ENCODE measurements at regions of chr1 and their contacts with region 1.

Region 1: DNA sequence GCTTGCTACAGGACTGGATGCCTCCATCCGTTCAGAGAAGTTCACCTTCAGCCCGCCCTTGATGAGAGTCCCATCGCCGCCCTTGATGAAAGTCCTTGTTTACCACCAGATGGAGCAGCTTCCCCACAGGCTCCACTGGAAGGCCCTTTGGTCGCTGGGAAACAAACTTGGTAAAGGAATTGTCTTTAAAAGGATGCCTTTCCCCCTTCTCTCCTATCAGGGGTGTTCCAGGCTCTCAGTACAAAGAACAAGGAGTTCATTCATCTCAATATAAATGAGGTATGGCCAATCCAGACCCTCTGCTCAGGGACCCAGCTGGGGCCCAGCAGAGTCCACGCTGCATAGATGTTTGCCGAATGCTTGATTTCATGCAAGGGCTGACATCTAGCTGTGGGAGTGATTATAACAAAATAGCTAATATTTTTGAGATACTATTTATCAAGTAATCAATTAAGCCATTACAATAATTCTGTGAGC is 50.8 kb downstream of the CAPN9 start:
- DNase-seq: peak; percentile 41
- ATAC-seq: peak; percentile 89
- H3K4me3 ChIP-seq: no peak overlapping the region
- H3K27ac ChIP-seq: no peak overlapping the region
- H3K4me1 ChIP-seq: no peaks in the 10 kb centered on the region
- H3K27me3 ChIP-seq: no peaks in the 10 kb centered on the region
- CTCF ChIP-seq: peak; percentile 59 to 93 (median 67)
- POLR2A ChIP-seq: no peak
- RAD21 ChIP-seq: peak; percentile 93

Region 2: DNA sequence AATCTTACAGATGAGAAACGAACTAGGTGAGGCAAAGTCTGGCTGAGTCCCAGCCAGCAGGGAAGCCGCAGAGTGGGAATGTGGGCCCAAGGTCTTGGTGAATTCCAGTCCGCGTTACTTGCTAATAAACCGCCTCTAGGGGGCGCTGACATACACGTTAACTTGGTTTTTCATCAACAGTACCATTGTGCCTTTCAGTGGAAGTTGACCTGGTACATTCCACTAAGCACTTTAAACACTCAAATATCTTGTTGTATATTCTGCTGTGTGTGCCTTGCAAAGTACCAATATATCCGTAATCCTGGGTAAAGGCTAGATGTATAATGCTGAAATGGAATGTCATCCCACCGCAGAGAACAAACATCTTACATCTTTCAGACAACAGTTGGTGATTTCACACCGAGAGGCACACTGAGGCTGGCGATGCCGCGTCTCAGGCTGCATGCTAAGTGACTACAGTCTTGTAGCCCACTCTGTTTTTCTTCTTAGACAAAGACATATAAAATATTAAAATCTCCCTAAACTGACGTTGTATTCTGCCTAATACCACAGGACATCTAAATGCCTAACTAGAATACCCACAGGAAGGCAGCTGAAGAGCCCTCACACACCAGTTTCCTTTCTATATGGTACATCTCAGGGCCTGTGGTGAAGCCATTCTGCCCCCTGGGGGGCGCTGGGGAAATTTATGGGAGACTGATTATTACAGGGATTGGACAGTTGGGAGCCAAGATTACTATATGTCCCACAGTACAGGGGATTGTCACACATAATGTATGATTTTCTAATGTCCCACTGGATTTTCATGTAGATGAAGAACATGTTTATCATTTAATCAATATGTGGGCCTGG is 119.5 kb after region 1 on chr1:
- CTCF ChIA-PET with region 1: no interaction called
- POLR2A ChIA-PET with region 1: no interaction called
- RAD21 ChIA-PET with region 1: no interaction called
- intact Hi-C with region 1: loop called (anchors 5 kb)
- DNase-seq: peak; percentile 62
- ATAC-seq: peak; percentile 88
- H3K4me3 ChIP-seq: no peak overlapping the region
- H3K27ac ChIP-seq: no peak overlapping the region
- H3K4me1 ChIP-seq: peaks cover 0 to 6% of the 10 kb centered on the region in 2 experiments; a peak in 1 of 4 replicates
- H3K27me3 ChIP-seq: no peaks in the 10 kb centered on the region
- CTCF ChIP-seq: peak; percentile 55 to 79 (median 71); a peak in 5 of 6 replicates
- POLR2A ChIP-seq: no peak
- RAD21 ChIP-seq: peak; percentile 67

Measured in HCT116 (cell line).